Mammary epithelial cell (primary cell): ENCODE measurements at regions of chr3 and their contacts with region 1.

Region 1: DNA sequence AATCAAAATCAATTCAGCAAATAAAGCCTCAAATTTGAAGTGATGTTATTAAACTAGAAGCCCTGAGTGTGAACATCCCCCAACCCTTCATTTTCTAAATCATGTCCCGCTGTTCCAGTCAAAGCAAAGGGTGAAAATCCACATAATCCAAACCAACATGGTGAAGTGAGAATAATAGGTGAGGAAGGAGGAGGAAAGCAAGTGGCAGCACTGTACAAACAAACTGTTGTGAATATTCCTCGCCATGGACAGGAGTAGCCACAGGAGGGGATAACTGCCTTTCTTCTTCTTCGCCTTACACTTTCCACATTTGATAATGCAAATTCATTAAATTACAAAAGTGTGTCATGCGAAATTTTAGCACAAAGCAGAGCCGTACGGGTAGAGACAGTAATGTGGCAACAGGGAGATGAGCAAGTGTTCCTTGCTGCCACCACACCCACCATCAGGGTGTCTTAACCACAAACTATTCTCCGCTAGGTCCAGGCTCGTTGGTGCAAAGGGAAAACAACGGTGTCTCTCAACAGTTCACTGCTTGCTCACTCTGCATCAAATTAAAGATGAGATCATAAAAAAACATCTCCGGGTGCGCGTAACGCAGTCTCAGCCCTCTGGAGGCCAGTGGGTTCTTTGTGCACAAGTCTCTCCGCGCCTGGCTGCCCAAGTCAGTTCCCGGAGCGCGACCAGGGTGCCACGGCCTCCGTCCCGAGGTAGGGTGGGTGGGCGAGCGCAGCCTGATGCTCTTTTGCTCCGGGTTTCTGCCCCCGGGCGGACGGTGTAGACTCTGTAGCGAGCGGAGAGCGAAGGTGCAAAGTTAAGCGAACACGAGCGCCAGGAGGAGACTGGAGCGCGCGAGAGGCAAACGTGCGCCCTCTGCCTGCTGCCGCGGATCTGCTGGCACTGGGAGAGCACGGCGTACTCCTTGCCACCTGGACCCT is 6.8 kb downstream of the EPHA3 start:
- DNase-seq: peak; percentile 84
- H3K4me3 ChIP-seq: peak overlapping the region; percentile 0 to 67 (median 55)
- H3K27ac ChIP-seq: no peak overlapping the region
- H3K4me1 ChIP-seq: peaks cover 12% of the 10 kb centered on the region
- H3K27me3 ChIP-seq: peaks cover 5% of the 10 kb centered on the region
- CTCF ChIP-seq: peak; percentile 53 to 88

Region 2: DNA sequence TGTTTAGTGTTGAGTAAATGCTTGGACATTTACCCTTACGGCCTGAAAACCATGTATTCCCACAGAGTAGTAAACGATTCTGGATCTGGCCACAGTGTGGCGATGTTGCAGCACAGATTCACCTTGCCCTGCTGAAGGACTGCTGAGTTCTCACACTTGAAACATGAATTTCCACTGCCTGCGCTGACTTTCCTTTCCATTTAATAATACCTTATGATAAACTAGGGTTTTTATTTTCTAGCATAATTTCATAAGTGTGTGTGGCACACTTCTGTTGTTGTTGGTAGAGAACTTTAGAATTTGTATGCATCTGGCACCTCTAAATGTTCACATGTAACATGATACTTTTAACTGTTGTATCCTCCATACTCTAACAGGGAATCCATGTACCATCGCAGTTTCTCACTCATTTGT is 910.5 kb before region 1 on chr3:
- CTCF ChIA-PET with region 1: no interaction called
- dilution Hi-C with region 1: no loop called
- in situ Hi-C with region 1: loop called in 1 of 2 experiments (anchors 25 kb)
- intact Hi-C with region 1: loop called (anchors 5 kb)
- DNase-seq: peak; percentile 42
- H3K4me3 ChIP-seq: no peak overlapping the region
- H3K27ac ChIP-seq: no peak overlapping the region
- H3K4me1 ChIP-seq: no peaks in the 10 kb centered on the region
- H3K27me3 ChIP-seq: no peaks in the 10 kb centered on the region
- CTCF ChIP-seq: peak; percentile 84 to 90

Region 3: GRCh38 chr3:88641033-88641604 is 473.1 kb before region 1 on chr3:
- CTCF ChIA-PET with region 1: no interaction called
- dilution Hi-C with region 1: no loop called
- in situ Hi-C with region 1: no loop called
- intact Hi-C with region 1: loop called (anchors 5 kb)
- DNase-seq: peak; percentile 6
- H3K4me3 ChIP-seq: no peak overlapping the region
- H3K27ac ChIP-seq: no peak overlapping the region
- H3K4me1 ChIP-seq: no peaks in the 10 kb centered on the region
- H3K27me3 ChIP-seq: no peaks in the 10 kb centered on the region
- CTCF ChIP-seq: peak in 1 of 2 donors; percentile 44

Region 4: DNA sequence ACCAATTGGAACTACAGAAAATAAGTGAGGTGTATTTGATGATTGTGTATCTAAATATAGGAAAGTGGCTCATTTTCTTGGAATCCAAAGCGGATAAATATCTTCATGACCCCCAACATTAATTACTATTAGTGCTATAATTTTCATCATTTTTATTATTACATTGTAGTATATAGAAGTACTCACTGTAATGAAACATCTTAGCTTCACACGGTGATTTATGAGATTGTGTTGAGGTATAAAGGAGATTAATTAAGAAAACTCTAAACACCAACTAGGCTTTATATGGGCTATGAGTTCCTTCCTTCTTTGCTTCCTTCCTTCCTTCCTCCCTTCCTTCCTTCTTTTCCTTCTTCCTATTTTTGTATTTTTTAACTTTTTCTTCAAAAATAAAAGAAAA is 45.4 kb after region 1 on chr3:
- CTCF ChIA-PET with region 1: no interaction called
- dilution Hi-C with region 1: no loop called
- in situ Hi-C with region 1: no loop called
- intact Hi-C with region 1: no loop called
- DNase-seq: no peak
- H3K4me3 ChIP-seq: no peak overlapping the region
- H3K27ac ChIP-seq: no peak overlapping the region
- H3K4me1 ChIP-seq: no peaks in the 10 kb centered on the region
- H3K27me3 ChIP-seq: peaks cover 2% of the 10 kb centered on the region
- CTCF ChIP-seq: no peak

Region 5: DNA sequence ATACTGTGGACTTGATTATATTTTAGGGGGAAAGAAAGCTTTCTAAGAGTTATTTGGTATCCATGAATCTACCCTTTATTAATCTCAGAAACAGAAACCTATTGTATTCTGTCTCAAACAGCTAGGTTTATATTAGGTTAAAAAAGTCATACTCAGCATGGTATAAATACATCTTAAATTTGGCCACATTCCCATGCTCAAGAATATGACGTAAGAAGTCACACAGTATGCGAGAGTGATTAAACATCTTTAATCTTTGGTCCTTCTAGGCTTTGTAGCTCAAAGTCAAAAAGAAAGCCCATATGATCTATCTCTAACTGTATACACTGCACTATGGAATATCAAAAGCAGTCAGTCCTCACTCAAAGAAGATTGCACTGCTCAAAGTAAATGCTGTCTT is 124.7 kb after region 1 on chr3:
- CTCF ChIA-PET with region 1: no interaction called
- dilution Hi-C with region 1: no loop called
- in situ Hi-C with region 1: no loop called
- intact Hi-C with region 1: loop called (anchors 10 kb)
- DNase-seq: no peak
- H3K4me3 ChIP-seq: no peak overlapping the region
- H3K27ac ChIP-seq: no peak overlapping the region
- H3K4me1 ChIP-seq: no peaks in the 10 kb centered on the region
- H3K27me3 ChIP-seq: no peaks in the 10 kb centered on the region
- CTCF ChIP-seq: no peak

Region 6: GRCh38 chr3:89434621-89435380 is 320.6 kb after region 1 on chr3:
- CTCF ChIA-PET with region 1: no interaction called
- dilution Hi-C with region 1: no loop called
- in situ Hi-C with region 1: no loop called
- intact Hi-C with region 1: no loop called
- DNase-seq: no peak
- H3K4me3 ChIP-seq: no peak overlapping the region
- H3K27ac ChIP-seq: no peak overlapping the region
- H3K4me1 ChIP-seq: no peaks in the 10 kb centered on the region
- H3K27me3 ChIP-seq: no peaks in the 10 kb centered on the region
- CTCF ChIP-seq: no peak

Region 7: GRCh38 chr3:90091204-90091924 is 977.2 kb after region 1 on chr3:
- CTCF ChIA-PET with region 1: no interaction called
- dilution Hi-C with region 1: no loop called
- in situ Hi-C with region 1: no loop called
- intact Hi-C with region 1: loop called (anchors 10 kb)
- DNase-seq: peak; percentile 14
- H3K4me3 ChIP-seq: no peak overlapping the region
- H3K27ac ChIP-seq: no peak overlapping the region
- H3K4me1 ChIP-seq: no peaks in the 10 kb centered on the region
- H3K27me3 ChIP-seq: no peaks in the 10 kb centered on the region
- CTCF ChIP-seq: peak; percentile 34 to 72